IMR-90 (cell line): ENCODE measurements at regions of chr5 and their contacts with region 1.

Region 1: GRCh38 chr5:141960449-141961202 is 2.6 kb upstream of the PCDH12 start:
- DNase-seq: peak; percentile 75
- ATAC-seq: peak; percentile 98
- H3K4me3 ChIP-seq: no peak overlapping the region
- H3K27ac ChIP-seq: no peak overlapping the region
- H3K4me1 ChIP-seq: no peaks in the 10 kb centered on the region
- H3K27me3 ChIP-seq: peaks cover 2% of the 10 kb centered on the region; the same call in 1 of the 2 replicates
- CTCF ChIP-seq: peak; percentile 90
- POLR2A ChIP-seq: no peak
- RAD21 ChIP-seq: peak; percentile 80

Region 2: GRCh38 chr5:141641634-141642267 is 318.9 kb before region 1 on chr5:
- CTCF ChIA-PET with region 1: no interaction called
- POLR2A ChIA-PET with region 1: no interaction called
- dilution Hi-C with region 1: no loop called
- in situ Hi-C with region 1: no loop called
- intact Hi-C with region 1: no loop called
- DNase-seq: peak; percentile 61
- ATAC-seq: peak; percentile 16
- H3K4me3 ChIP-seq: no peak overlapping the region
- H3K27ac ChIP-seq: no peak overlapping the region
- H3K4me1 ChIP-seq: peaks cover 4% of the 10 kb centered on the region; the same call in 1 of the 2 replicates
- H3K27me3 ChIP-seq: no peaks in the 10 kb centered on the region
- CTCF ChIP-seq: peak; percentile 45
- POLR2A ChIP-seq: no peak
- RAD21 ChIP-seq: 0 out of 2 replicates have a peak, but pooled peaks have one; percentile 28

Region 3: DNA sequence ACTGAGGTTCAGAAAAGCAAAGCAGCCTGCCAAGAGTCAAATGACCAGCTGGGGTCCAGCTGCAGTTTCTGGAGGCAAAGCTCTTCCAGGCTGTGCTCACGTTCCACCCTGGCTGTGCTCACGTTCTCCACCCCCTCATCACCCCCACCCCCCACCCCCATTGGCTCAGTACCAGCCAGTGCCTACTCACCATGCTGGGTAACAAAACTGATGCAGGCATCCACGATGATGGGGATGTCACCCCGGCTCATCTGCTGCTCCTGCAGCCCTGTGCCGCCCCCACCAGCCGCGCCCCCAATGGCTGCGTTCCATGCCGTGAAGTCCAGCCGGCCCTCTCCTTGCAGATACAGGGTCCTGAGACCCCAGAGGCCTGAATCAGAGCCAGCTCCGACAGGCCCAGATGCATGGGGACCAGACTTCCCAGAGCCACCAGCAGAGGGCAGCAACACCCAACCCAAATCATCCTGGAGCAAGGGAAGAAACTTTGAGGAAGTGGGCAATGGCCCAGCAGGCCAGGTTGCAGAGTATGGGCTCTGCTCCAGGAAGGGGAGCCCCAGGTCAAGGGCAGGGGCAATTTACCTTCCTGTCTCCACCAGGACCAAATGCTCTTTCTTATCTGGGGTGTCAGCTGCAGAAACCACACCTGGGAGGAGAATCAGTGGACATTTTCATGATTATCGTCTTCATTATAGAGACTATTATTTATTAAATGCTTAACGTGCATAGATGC is 295.7 kb before region 1 on chr5:
- CTCF ChIA-PET with region 1: interaction called, 3 read pairs
- POLR2A ChIA-PET with region 1: no interaction called
- dilution Hi-C with region 1: no loop called
- in situ Hi-C with region 1: no loop called
- intact Hi-C with region 1: loop called (anchors 1 kb)
- DNase-seq: peak; percentile 58
- ATAC-seq: peak; percentile 93
- H3K4me3 ChIP-seq: no peak overlapping the region
- H3K27ac ChIP-seq: no peak overlapping the region
- H3K4me1 ChIP-seq: no peaks in the 10 kb centered on the region
- H3K27me3 ChIP-seq: no peaks in the 10 kb centered on the region
- CTCF ChIP-seq: peak; percentile 88
- POLR2A ChIP-seq: no peak
- RAD21 ChIP-seq: peak; percentile 83

Region 4: DNA sequence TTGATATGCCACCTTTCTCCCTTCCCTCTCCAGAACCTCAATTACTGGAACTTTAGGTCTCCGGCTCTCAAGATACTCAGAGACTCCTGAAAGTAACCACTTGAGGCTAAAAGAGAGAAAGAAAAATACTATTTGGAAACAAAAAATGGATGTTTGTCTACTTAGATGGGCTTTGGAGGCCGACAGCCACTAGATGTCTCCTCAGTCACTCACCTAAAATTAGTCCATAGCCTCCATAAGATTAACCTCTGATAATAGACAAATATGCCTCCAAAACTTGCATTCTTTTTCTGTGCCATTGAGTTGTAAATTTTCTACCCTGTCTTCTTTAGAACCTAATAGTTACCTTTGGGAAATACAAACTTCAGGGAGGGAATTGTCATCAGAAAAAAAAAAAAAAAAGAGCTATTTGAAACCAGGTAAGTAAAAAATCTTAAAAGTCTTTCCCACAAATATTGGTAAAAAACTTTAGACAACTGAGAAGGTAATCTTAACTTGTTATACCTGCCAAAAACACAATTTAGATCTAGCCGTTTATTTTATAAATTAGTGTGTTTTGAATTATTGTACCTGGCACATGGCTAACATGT is 71.2 kb before region 1 on chr5:
- CTCF ChIA-PET with region 1: interaction called, 27 read pairs
- POLR2A ChIA-PET with region 1: no interaction called
- dilution Hi-C with region 1: no loop called
- in situ Hi-C with region 1: no loop called
- intact Hi-C with region 1: loop called (anchors 1 kb)
- DNase-seq: no peak
- ATAC-seq: peak; percentile 40; the same call in 1 of the 2 replicates
- H3K4me3 ChIP-seq: no peak overlapping the region
- H3K27ac ChIP-seq: no peak overlapping the region
- H3K4me1 ChIP-seq: no peaks in the 10 kb centered on the region
- H3K27me3 ChIP-seq: peaks cover 12% of the 10 kb centered on the region
- CTCF ChIP-seq: peak; percentile 44
- POLR2A ChIP-seq: no peak
- RAD21 ChIP-seq: peak; percentile 35

Region 5: DNA sequence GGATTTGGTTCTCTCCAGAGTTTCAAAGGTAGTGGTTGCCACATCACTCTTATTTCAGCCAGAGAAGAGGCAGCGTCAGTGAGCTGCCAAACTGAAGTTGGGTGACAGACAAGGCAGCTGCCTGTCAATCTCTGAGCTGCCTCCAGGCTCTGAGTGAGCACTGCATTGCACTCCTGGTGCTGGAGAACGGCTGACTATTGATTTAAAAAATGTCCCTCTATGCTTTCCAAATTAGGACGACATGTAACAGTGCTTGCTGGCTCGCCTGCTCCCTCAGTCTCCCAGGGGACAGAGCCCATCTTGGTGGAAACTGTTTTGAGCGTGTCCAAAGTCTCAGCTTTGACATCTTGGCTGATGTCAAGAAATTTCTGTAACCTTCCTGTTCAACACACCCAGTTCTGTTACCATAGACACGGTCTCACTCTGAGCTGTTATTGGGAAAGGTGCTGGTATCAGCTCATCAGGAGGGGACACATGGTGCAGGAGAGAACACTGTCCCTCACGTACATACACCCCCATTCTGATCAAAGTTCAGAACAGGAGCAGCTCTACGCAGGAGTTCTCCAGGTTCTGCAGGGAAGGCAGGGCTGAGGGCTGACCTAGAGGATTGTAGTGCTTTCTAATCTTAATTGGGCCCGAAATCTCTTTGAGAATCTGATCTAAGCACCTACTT is 18.3 kb before region 1 on chr5:
- CTCF ChIA-PET with region 1: interaction called, 15 read pairs
- POLR2A ChIA-PET with region 1: no interaction called
- dilution Hi-C with region 1: no loop called
- in situ Hi-C with region 1: no loop called
- intact Hi-C with region 1: no loop called
- DNase-seq: no peak
- ATAC-seq: no peak
- H3K4me3 ChIP-seq: no peak overlapping the region
- H3K27ac ChIP-seq: no peak overlapping the region
- H3K4me1 ChIP-seq: peaks cover 2% of the 10 kb centered on the region; the same call in 1 of the 2 replicates
- H3K27me3 ChIP-seq: peaks cover 3% of the 10 kb centered on the region; the same call in 1 of the 2 replicates
- CTCF ChIP-seq: no peak
- POLR2A ChIP-seq: no peak
- RAD21 ChIP-seq: no peak

Region 6: GRCh38 chr5:142046191-142046590 is 85.6 kb after region 1 on chr5:
- CTCF ChIA-PET with region 1: no interaction called
- POLR2A ChIA-PET with region 1: no interaction called
- dilution Hi-C with region 1: no loop called
- in situ Hi-C with region 1: no loop called
- intact Hi-C with region 1: no loop called
- DNase-seq: no peak
- ATAC-seq: no peak
- H3K4me3 ChIP-seq: no peak overlapping the region
- H3K27ac ChIP-seq: no peak overlapping the region
- H3K4me1 ChIP-seq: no peaks in the 10 kb centered on the region
- H3K27me3 ChIP-seq: peaks cover 12% of the 10 kb centered on the region
- CTCF ChIP-seq: no peak
- POLR2A ChIP-seq: no peak
- RAD21 ChIP-seq: no peak